ENCODE measurements at regions of chr20 and their contacts with region 1.

Region 1: GRCh38 chr20:10434832-10435812 is at the start of gene SLX4IP:
- DNase-seq: peak; percentile 97
- H3K4me3 ChIP-seq: peak within 1 kb of the TSS; percentile 78 to 86 (median 86)
- H3K27ac ChIP-seq: peak within 1 kb of the TSS; percentile 91 to 93 (median 92)
- H3K4me1 ChIP-seq: peaks cover 23 to 38% (median 35%) of the 10 kb centered on the region in 4 donors
- H3K27me3 ChIP-seq: no peaks in the 10 kb centered on the region
- CTCF ChIP-seq: no peak
- EP300 ChIP-seq: no peak
- POLR2A ChIP-seq: no peak
- total RNA-seq, gene SLX4IP: 1.2 to 2.1 (median 1.5) TPM

Region 2: GRCh38 chr20:9928281-9928737 is 506.8 kb before region 1 on chr20:
- intact Hi-C with region 1: no loop called
- DNase-seq: no peak
- H3K4me3 ChIP-seq: no peak overlapping the region
- H3K27ac ChIP-seq: no peak overlapping the region
- H3K4me1 ChIP-seq: no peaks in the 10 kb centered on the region
- H3K27me3 ChIP-seq: no peaks in the 10 kb centered on the region
- CTCF ChIP-seq: no peak
- EP300 ChIP-seq: no peak
- POLR2A ChIP-seq: no peak

Region 3: DNA sequence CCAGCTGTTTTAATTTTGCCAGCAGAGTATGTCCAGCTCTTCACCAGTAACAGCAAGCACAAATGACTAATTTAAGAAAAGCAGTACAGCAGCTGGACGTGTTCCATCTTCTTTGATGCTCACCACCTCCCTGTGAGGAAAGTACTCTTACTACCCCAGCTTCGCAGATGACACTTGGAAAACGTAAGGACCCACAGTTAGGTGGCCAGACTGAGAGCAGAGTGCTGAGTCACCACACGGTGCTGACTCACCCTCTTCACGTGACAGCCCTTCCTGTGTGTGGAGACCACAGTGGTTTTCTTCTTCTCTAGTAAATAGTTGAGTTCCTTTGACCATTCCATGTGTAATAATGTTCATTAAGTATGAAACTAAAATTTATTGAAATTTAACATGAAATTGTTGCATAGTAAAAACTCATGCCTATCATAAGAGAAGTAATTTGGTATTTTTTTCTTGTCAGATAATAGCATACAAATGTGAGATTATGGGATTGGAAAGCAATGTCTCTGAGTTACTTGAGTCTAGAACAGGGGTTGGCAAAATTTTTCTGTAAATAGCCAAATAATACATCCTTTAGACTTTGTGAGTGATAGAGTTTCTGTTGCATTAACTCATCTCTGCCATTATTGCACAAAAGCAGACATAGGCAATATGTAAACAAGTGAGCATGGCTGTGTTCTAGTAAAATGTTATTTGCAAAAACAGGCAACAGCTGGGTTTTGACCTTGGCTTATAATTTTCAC is 76.6 kb after region 1 on chr20:
- intact Hi-C with region 1: loop called (anchors 10 kb)
- DNase-seq: no peak
- H3K4me3 ChIP-seq: peak overlapping the region in 2 of 4 donors; percentile 2 to 22
- H3K27ac ChIP-seq: peak overlapping the region; percentile 51 to 63 (median 54)
- H3K4me1 ChIP-seq: peaks cover 30 to 36% (median 32%) of the 10 kb centered on the region in 4 donors
- H3K27me3 ChIP-seq: no peaks in the 10 kb centered on the region
- CTCF ChIP-seq: no peak
- EP300 ChIP-seq: no peak
- POLR2A ChIP-seq: no peak

Region 4: DNA sequence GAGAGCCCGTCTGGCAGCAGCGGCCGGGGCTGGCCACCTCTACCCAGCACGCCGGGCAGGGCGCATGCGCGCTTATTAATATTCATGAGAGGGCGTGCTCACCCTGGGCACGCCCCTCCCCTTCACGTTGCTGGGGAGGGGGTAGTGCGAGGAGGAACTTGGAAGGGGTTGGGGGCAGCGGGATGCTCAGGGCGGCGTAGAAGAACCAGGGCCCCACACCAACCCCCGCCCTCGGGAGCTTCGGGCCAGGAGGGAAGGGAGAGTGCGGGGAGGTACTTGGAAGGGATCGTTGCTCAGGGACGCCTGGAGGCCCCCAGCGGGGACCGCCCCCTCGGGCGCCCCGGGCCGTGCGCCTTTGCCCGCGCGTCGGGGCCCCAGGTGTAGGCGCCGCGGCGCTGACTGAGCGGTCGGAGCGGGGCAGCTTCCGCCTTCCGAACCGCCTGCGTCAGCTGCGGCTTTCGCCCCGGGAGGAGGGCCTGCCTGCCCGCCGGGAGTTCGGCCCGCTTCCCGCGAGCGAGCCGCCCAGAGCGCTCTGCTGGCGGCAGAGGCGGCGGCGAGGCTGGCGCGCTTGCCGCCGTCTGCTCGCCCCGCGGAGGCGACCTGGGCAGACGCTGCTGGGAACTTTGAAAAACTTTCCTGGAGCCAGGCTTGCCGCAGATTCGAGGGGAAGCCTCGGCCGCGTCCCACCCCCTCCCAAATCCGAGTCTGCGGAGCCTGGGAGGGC is 239.0 kb after region 1 on chr20 and contains the start of gene JAG1:
- intact Hi-C with region 1: loop called (anchors 5 kb)
- DNase-seq: peak; percentile 95
- H3K4me3 ChIP-seq: peak within 1 kb of the TSS; percentile 67 to 78 (median 72)
- H3K27ac ChIP-seq: peak within 1 kb of the TSS; percentile 79 to 99 (median 93)
- H3K4me1 ChIP-seq: peaks cover 6 to 59% (median 47%) of the 10 kb centered on the region in 4 donors
- H3K27me3 ChIP-seq: peaks cover 0 to 31% (median 0%) of the 10 kb centered on the region in 4 donors
- CTCF ChIP-seq: no peak
- EP300 ChIP-seq: no peak
- POLR2A ChIP-seq: peak; percentile 43
- total RNA-seq, gene JAG1: 30.7 to 41.9 (median 36.3) TPM

Measured in esophagus muscularis mucosa (tissue), 4 donors.